Thyroid gland (tissue), 4 donors: ENCODE measurements at regions of chr11 and their contacts with region 1.

Region 1: GRCh38 chr11:126716456-126717083 is 284.0 kb downstream of the KIRREL3 start:
- DNase-seq: peak; percentile 50 to 64
- H3K4me3 ChIP-seq: no peak overlapping the region
- H3K27ac ChIP-seq: no peak overlapping the region
- H3K4me1 ChIP-seq: no peaks in the 10 kb centered on the region
- H3K27me3 ChIP-seq: no peaks in the 10 kb centered on the region
- CTCF ChIP-seq: peak; percentile 24 to 64 (median 52)
- POLR2A ChIP-seq: no peak

Region 2: DNA sequence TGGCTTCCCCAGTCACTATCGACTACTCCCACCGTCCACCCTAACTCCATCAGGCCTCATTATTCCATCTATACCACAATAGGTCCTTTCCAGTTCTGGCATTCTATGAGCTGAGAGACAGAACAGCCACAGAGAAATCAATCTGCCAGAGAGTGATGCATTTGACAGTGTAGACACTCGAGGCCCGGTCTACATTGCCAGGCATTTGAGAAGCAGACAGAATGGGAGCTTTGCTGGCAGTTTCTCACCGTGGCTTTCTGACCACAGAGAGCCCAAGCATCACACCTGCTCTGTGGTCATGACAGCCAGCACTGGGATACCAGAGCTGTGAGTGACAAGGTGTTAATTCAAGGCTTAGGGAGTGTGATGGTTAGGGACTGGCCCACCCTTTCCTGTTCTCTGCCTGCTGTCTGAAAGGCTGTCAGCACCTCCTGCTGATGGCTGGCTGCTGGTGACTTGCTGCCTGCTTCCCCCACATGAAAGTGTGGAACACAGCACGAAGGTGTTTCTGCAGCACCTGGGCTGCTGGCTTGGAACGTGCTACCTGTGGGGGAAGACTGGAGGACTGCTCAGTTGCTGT is 146.2 kb after region 1 on chr11:
- intact Hi-C with region 1: loop called (anchors 10 kb)
- DNase-seq: no peak
- H3K4me3 ChIP-seq: no peak overlapping the region
- H3K27ac ChIP-seq: no peak overlapping the region
- H3K4me1 ChIP-seq: no peaks in the 10 kb centered on the region
- H3K27me3 ChIP-seq: no peaks in the 10 kb centered on the region
- CTCF ChIP-seq: no peak
- POLR2A ChIP-seq: no peak

Region 3: DNA sequence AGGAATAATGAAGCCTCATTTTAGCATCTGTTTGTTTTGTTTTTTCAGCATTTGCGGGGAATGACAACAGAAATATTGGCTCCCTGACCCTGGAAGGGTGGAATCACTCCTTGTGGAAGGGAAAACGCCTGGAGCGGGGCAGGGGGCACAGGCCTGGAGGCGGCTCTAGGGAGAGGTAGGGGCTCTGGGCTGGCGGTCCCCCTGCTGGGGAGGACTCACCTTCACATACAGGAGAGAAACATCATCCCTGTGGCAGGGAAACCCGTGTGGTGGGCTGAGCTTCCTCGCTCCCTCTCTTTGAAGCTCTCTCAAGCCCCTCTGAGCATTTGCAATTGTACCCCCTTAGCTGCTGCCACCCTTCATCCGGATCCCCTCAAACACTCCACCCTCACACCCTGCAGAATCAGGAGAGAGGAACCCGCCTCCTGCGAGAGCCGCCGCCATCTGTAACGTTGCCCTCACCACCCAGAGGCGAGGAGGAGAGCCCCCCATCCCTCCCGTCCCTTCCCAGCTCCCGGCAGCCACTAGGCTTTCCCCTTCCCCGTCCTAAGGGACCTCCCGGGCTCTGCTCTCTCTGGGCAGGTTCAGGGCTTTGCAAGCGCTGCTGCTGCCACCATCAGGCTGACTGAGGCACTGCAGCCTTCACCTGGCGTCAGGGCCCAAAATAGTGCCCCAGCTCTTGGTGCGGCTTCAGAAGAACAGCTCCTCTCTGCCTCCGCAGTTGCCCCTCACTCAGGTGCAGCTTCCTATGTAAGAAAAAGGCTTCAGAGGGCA is 273.6 kb after region 1 on chr11:
- intact Hi-C with region 1: loop called (anchors 2 kb)
- DNase-seq: peak; percentile 63 to 64
- H3K4me3 ChIP-seq: no peak overlapping the region
- H3K27ac ChIP-seq: no peak overlapping the region
- H3K4me1 ChIP-seq: no peaks in the 10 kb centered on the region
- H3K27me3 ChIP-seq: no peaks in the 10 kb centered on the region
- CTCF ChIP-seq: peak; percentile 65 to 95 (median 88)
- POLR2A ChIP-seq: no peak